CD14-positive monocyte (primary cell): ENCODE measurements at regions of chr9 and their contacts with region 1.

Region 1: DNA sequence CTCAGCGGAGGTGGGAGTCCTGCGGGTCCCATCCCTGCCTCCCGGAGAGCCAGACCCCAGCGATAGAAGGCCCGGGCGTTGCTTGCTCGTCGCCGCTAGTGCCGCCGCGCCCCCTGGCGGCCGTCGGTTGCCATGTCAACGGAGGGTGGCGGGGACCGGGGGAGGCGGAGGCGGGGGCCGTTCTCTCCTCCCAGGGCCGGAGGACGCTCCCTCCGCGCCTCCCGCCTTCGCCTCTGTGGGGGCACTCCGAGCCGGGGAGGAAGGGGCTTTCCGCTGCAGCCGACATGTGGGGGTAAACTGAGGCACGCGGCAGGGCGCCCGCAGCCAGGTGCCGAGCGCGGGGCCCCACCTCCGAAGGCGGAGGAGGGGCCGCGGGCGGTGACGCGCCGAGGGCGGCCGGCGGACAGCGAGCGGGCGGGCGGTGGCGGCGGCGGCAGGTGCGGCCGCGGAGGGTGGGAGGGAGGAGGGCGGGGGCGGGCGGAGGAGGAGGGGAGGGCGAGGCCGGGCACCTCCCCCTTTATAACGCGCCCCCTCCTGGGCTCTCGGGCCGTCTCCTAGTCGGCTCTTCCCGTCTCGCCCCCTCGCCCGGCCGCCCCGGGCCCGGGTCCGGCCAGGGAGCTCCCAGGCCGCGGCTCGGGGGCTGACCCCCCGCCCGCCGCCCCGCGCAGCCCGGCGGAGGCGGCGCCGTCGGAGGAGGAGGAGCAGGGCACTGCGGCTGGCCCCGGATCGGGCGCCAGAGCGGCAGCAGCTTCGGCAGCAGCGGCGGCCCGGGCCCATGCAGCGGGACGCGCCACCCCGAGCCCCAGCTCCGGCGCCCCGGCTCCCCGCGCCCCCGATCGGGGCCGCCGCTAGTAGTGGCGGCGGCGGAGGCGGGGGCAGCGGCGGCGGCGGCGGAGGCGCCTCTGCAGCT is 556 bp upstream of the CDK9 start:
- DNase-seq: peak; percentile 75 to 86 (median 83)
- H3K4me3 ChIP-seq: peak overlapping the region; percentile 40 to 98 (median 96)
- H3K4me3 Mint-ChIP-seq: peak overlapping the region; percentile 53 to 70
- H3K27ac ChIP-seq: peak overlapping the region; percentile 96 to 97
- H3K27ac Mint-ChIP-seq: peak overlapping the region; percentile 93 to 99 (median 98)
- H3K4me1 ChIP-seq: peaks cover 58 to 64% of the 10 kb centered on the region in 2 donors
- H3K4me1 Mint-ChIP-seq: peaks cover 61% of the 10 kb centered on the region
- H3K27me3 ChIP-seq: no peaks in the 10 kb centered on the region
- H3K27me3 Mint-ChIP-seq: peaks cover 0 to 9% (median 0%) of the 10 kb centered on the region in 3 donors
- CTCF ChIP-seq: peak; percentile 91

Region 2: GRCh38 chr9:127519301-127520166 is 265.7 kb before region 1 on chr9:
- intact Hi-C with region 1: loop called in 1 of 2 experiments (anchors 5 kb)
- DNase-seq: peak; percentile 98 to 99 (median 98)
- H3K4me3 ChIP-seq: peak overlapping the region in 1 of 3 experiments; percentile 24
- H3K4me3 Mint-ChIP-seq: peak overlapping the region in 1 of 2 donors; percentile 6
- H3K27ac ChIP-seq: peak overlapping the region; percentile 78 to 87
- H3K27ac Mint-ChIP-seq: peak overlapping the region; percentile 90 to 96 (median 95)
- H3K4me1 ChIP-seq: peaks cover 37 to 39% of the 10 kb centered on the region in 2 donors
- H3K4me1 Mint-ChIP-seq: peaks cover 38% of the 10 kb centered on the region
- H3K27me3 ChIP-seq: no peaks in the 10 kb centered on the region
- H3K27me3 Mint-ChIP-seq: peaks cover 2 to 6% (median 3%) of the 10 kb centered on the region in 3 donors
- CTCF ChIP-seq: no peak

Region 3: GRCh38 chr9:127574072-127575017 is 210.9 kb before region 1 on chr9:
- intact Hi-C with region 1: loop called in 1 of 2 experiments (anchors 5 kb)
- DNase-seq: peak in 2 of 3 donors; percentile 55 to 77
- H3K4me3 ChIP-seq: peak overlapping the region in 1 of 3 experiments; percentile 31
- H3K4me3 Mint-ChIP-seq: peak overlapping the region; percentile 51 to 68
- H3K27ac ChIP-seq: peak overlapping the region; percentile 64 to 77
- H3K27ac Mint-ChIP-seq: peak overlapping the region; percentile 80 to 95 (median 91)
- H3K4me1 ChIP-seq: peaks cover 85 to 90% of the 10 kb centered on the region in 2 donors
- H3K4me1 Mint-ChIP-seq: peaks cover 87% of the 10 kb centered on the region
- H3K27me3 ChIP-seq: no peaks in the 10 kb centered on the region
- H3K27me3 Mint-ChIP-seq: peaks cover 0 to 2% (median 0%) of the 10 kb centered on the region in 3 donors
- CTCF ChIP-seq: no peak

Region 4: DNA sequence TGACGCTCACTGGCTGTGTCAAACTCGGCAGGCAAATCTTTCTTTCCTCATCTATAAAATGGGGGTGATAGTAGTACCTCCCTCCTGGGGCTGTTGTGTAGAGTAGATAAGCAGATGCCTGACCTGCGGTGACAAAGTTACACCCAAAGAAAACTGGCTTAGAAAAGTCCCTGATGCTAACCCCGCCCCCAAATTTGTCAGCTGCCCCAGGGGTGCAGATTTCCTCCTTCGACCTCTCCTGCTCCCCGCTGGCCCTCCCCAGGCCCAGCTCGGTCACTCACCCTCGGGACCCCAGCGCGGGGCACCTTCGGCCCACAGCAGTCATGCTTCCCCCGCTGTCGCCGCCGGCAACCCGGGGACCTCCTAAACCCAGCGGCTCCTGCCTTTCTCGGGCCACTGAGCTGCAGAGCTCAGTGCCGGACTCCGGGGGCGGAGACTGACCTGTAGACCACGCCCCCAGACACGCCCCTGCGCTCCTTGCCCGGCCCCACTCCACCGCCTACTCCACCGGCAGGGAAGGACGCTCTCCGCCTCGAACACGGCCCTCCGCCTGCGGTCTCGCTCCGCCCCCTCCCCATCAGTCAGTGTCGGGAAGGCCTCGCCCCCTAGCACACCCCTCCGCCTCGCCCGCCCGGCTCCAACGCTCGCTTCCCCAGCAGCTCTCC is 14.2 kb before region 1 on chr9:
- intact Hi-C with region 1: loop called (anchors 1 to 2 kb)
- DNase-seq: peak; percentile 94 to 98 (median 98)
- H3K4me3 ChIP-seq: peak overlapping the region; percentile 29 to 80 (median 60)
- H3K4me3 Mint-ChIP-seq: peak overlapping the region; percentile 88 to 91
- H3K27ac ChIP-seq: peak overlapping the region; percentile 51 to 80
- H3K27ac Mint-ChIP-seq: peak overlapping the region; percentile 86 to 94 (median 89)
- H3K4me1 ChIP-seq: peaks cover 68 to 91% of the 10 kb centered on the region in 2 donors
- H3K4me1 Mint-ChIP-seq: peaks cover 83% of the 10 kb centered on the region
- H3K27me3 ChIP-seq: no peaks in the 10 kb centered on the region
- H3K27me3 Mint-ChIP-seq: peaks cover 0 to 3% (median 0%) of the 10 kb centered on the region in 3 donors
- CTCF ChIP-seq: no peak

Region 5: GRCh38 chr9:127809512-127810377 is 24.5 kb after region 1 on chr9:
- intact Hi-C with region 1: no loop called
- DNase-seq: no peak
- H3K4me3 ChIP-seq: no peak overlapping the region
- H3K4me3 Mint-ChIP-seq: no peak overlapping the region
- H3K27ac ChIP-seq: no peak overlapping the region
- H3K27ac Mint-ChIP-seq: peak overlapping the region in 1 of 7 donors; percentile 58
- H3K4me1 ChIP-seq: no peaks in the 10 kb centered on the region
- H3K4me1 Mint-ChIP-seq: peaks cover 5% of the 10 kb centered on the region
- H3K27me3 ChIP-seq: no peaks in the 10 kb centered on the region
- H3K27me3 Mint-ChIP-seq: peaks cover 0 to 3% (median 0%) of the 10 kb centered on the region in 3 donors
- CTCF ChIP-seq: no peak

Region 6: GRCh38 chr9:127869310-127870152 is 84.3 kb after region 1 on chr9:
- intact Hi-C with region 1: loop called (anchors 1 to 5 kb)
- DNase-seq: peak; percentile 81 to 88 (median 86)
- H3K4me3 ChIP-seq: no peak overlapping the region
- H3K4me3 Mint-ChIP-seq: peak overlapping the region in 1 of 2 donors; percentile 11
- H3K27ac ChIP-seq: no peak overlapping the region
- H3K27ac Mint-ChIP-seq: peak overlapping the region in 4 of 7 donors; percentile 32 to 66 (median 61)
- H3K4me1 ChIP-seq: peaks cover 16 to 22% of the 10 kb centered on the region in 2 donors
- H3K4me1 Mint-ChIP-seq: peaks cover 21% of the 10 kb centered on the region
- H3K27me3 ChIP-seq: no peaks in the 10 kb centered on the region
- H3K27me3 Mint-ChIP-seq: peaks cover 0 to 2% (median 2%) of the 10 kb centered on the region in 3 donors
- CTCF ChIP-seq: peak; percentile 96